Sigmoid colon (tissue), 7 donors: ENCODE measurements at regions of chr4 and their contacts with region 1.

Region 1: DNA sequence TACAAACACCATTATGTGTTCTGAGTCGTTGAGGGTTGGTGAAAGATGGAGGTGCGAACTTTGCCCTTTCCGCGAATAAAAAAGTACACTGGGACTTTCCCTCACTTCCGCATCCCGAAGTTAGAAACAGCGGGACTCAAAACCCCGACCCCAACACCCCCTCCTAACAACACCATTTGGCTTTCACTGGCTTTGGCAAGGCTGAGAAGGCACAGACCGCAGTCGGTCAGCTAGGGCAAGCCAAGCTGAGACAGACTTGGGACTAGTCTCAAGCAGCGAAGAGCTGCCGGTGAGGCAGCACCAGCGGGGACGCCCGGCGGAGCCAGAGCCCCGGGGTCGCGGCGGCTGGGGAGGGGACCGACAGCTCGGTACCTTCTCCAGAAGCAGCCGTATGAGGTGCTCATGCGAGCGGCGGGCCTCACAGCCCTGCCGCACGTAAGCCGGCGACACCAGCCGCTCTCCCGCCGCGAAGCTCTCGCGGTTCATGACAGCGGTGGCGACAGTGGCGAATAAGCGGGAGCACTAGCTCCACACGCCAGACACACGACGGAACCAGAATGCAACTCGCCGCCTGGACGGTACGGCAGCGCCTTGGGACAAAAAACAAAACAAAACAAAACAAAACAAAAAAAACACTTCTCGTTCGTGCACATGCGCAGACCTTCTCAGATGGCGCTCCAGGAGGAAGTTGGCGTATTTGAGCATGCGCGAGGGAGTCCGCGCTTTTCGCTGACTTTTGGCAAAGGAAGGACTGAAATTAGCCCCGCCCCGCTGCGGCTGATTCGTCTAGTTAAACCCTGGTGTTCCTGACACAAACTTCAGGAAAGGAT is at the start of gene SEPSECS:
- DNase-seq: peak; percentile 99
- H3K4me3 ChIP-seq: peak within 1 kb of the TSS; percentile 72 to 91 (median 86)
- H3K27ac ChIP-seq: peak within 1 kb of the TSS; percentile 91 to 98 (median 97)
- H3K4me1 ChIP-seq: peaks cover 0 to 23% (median 16%) of the 10 kb centered on the region in 4 donors
- H3K27me3 ChIP-seq: no peaks in the 10 kb centered on the region
- CTCF ChIP-seq: no peak
- EP300 ChIP-seq: no peak
- POLR2A ChIP-seq: peak in 1 of 2 donors; percentile 79
- total RNA-seq, gene SEPSECS: 7.9 to 10.0 (median 8.6) TPM

Region 2: GRCh38 chr4:24912252-24913118 is 247.6 kb before region 1 on chr4 and contains the start of gene CCDC149:
- intact Hi-C with region 1: loop called (anchors 5 kb)
- DNase-seq: peak; percentile 84
- H3K4me3 ChIP-seq: peak within 1 kb of the TSS; percentile 36 to 93 (median 80)
- H3K27ac ChIP-seq: peak within 1 kb of the TSS; percentile 87 to 95 (median 92)
- H3K4me1 ChIP-seq: peaks cover 0 to 23% (median 11%) of the 10 kb centered on the region in 4 donors
- H3K27me3 ChIP-seq: no peaks in the 10 kb centered on the region
- CTCF ChIP-seq: no peak
- EP300 ChIP-seq: no peak
- POLR2A ChIP-seq: no peak
- total RNA-seq, gene CCDC149: 11.8 to 21.3 (median 16.5) TPM

Region 3: GRCh38 chr4:25030277-25031076 is 129.6 kb before region 1 on chr4 and contains the start of gene LGI2:
- intact Hi-C with region 1: loop called (anchors 5 kb)
- DNase-seq: peak; percentile 74
- H3K4me3 ChIP-seq: peak within 1 kb of the TSS; percentile 29 to 68 (median 58)
- H3K27ac ChIP-seq: peak within 1 kb of the TSS; percentile 69 to 83 (median 76)
- H3K4me1 ChIP-seq: peaks cover 0 to 28% (median 16%) of the 10 kb centered on the region in 4 donors
- H3K27me3 ChIP-seq: no peaks in the 10 kb centered on the region
- CTCF ChIP-seq: no peak
- EP300 ChIP-seq: no peak
- POLR2A ChIP-seq: no peak
- total RNA-seq, gene LGI2: 1.2 to 6.7 (median 3.5) TPM

Region 4: DNA sequence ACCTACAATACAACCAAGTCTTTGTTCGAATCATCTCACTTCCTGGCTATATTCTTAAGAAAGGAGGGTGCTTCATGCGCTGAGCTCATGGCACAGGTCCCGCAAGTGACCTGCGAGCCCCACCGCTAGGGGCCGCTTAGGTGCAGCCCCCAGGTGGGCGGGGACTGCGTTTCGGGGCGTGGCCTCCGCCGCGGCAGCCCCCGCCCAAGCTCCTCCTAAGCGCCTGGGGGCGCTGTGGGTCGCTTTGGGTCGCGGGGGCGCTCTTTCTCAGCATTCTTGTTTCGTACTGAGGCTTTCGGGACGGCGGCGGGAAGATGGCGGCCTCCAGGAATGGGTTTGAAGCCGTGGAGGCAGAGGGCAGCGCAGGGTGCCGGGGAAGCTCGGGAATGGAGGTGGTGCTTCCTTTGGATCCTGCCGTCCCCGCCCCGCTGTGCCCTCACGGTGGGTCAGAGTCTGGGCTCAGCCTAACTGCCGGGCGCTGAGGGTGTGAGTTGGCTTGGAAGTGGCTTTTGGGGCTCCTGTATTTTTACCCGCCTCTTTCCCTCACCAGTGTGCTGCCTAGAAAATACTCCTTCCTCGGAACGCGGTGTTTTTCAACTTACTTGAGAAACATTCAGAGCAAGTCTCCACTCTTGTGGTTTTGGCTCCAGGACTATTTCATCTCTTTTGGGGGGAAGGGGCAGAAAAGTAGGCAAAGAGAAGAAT is 152.5 kb after region 1 on chr4 and contains the start of gene ZCCHC4:
- intact Hi-C with region 1: loop called (anchors 5 kb)
- DNase-seq: peak; percentile 93
- H3K4me3 ChIP-seq: peak within 1 kb of the TSS; percentile 47 to 76 (median 70)
- H3K27ac ChIP-seq: peak within 1 kb of the TSS; percentile 62 to 83 (median 80)
- H3K4me1 ChIP-seq: peaks cover 0 to 9% (median 8%) of the 10 kb centered on the region in 4 donors
- H3K27me3 ChIP-seq: no peaks in the 10 kb centered on the region
- CTCF ChIP-seq: peak; percentile 53 to 99 (median 84)
- EP300 ChIP-seq: no peak
- POLR2A ChIP-seq: no peak
- total RNA-seq, gene ZCCHC4: 9.1 to 21.8 (median 17.8) TPM

Region 5: DNA sequence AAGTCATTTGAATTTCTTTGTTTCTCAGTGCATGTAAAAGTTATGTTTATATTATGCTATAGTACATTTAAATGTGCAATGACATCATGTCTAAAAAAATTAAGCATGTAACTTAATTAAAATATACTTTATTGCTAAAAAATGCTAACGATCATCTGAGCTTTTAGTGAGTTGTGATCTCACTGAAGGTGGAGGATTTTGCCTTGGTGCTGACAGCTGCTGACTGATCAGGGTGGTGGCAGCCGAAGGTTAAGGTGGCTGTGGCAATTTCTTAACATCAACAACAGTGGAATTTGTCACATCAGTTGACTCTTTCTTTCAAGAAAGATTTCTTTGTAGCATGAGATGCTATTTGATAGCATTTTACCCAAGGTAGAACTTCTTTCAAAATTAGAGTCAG is 223.5 kb after region 1 on chr4:
- intact Hi-C with region 1: loop called (anchors 5 kb)
- DNase-seq: no peak
- H3K4me3 ChIP-seq: no peak overlapping the region
- H3K27ac ChIP-seq: no peak overlapping the region
- H3K4me1 ChIP-seq: peaks cover 0 to 11% (median 8%) of the 10 kb centered on the region in 4 donors
- H3K27me3 ChIP-seq: no peaks in the 10 kb centered on the region
- CTCF ChIP-seq: no peak
- EP300 ChIP-seq: no peak
- POLR2A ChIP-seq: no peak